ENCODE measurements at regions of chr9 and their contacts with region 1.

Region 1: DNA sequence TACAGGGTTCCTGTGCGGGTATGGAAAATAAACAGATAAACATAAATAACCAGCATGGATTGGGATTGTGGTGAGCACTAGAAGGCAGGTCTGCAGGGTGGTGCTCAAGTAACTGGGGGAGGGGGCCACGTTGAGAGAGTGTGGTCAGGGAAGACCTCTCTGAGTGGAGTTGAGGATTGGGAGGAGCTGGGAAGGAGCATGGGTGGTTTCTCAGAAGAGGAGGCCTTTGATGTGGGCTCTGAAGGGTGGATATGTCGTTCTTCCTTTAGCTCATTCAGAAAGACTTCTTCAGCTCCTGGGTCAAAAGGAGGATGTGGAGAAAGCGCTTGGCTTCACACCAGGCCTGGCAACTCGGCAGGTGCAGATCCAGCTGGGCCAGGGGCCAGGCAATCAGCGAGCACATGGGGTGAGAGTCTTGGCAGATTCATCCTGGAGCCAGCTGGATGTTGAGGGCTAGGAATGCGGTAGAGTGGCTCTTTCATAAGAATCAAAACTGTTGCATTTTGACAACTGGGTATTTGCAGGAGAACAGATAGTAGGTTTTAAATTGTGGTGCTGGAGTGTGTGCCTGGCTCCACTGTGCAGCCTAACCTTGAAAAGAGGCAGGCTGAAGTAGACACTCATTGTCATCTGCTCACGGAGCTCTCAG is 71.7 kb downstream of the PCSK5 start:
- DNase-seq: peak; percentile 66 to 88 (median 87)
- ATAC-seq: peak; percentile 77 to 80
- H3K4me3 ChIP-seq: no peak overlapping the region
- H3K27ac ChIP-seq: peak overlapping the region; percentile 17
- H3K4me1 ChIP-seq: peaks cover 7% of the 10 kb centered on the region
- H3K27me3 ChIP-seq: no peaks in the 10 kb centered on the region

Region 2: GRCh38 chr9:75909776-75910175 is 52.4 kb before region 1 on chr9:
- intact Hi-C with region 1: loop called in 1 of 4 experiments (anchors 5 kb)
- DNase-seq: no peak
- ATAC-seq: no peak
- H3K4me3 ChIP-seq: no peak overlapping the region
- H3K27ac ChIP-seq: no peak overlapping the region
- H3K4me1 ChIP-seq: peaks cover 2% of the 10 kb centered on the region
- H3K27me3 ChIP-seq: no peaks in the 10 kb centered on the region

Region 3: GRCh38 chr9:76023715-76024195 is 61.6 kb after region 1 on chr9:
- intact Hi-C with region 1: no loop called
- DNase-seq: no peak
- ATAC-seq: no peak
- H3K4me3 ChIP-seq: no peak overlapping the region
- H3K27ac ChIP-seq: no peak overlapping the region
- H3K4me1 ChIP-seq: no peaks in the 10 kb centered on the region
- H3K27me3 ChIP-seq: no peaks in the 10 kb centered on the region

Measured in right cardiac atrium (tissue), 5 donors.